CD8-positive, alpha-beta T cell (primary cell): ENCODE measurements at regions of chr4 and their contacts with region 1.

Region 1: GRCh38 chr4:10535912-10536311 is 78.7 kb upstream of the ZNF518B start:
- DNase-seq: no peak
- ATAC-seq: no peak
- H3K4me3 ChIP-seq: no peak overlapping the region
- H3K4me3 Mint-ChIP-seq: no peak overlapping the region
- H3K27ac ChIP-seq: no peak overlapping the region
- H3K27ac Mint-ChIP-seq: no peak overlapping the region
- H3K4me1 ChIP-seq: no peaks in the 10 kb centered on the region
- H3K4me1 Mint-ChIP-seq: no peaks in the 10 kb centered on the region
- H3K27me3 ChIP-seq: no peaks in the 10 kb centered on the region
- H3K27me3 Mint-ChIP-seq: peaks cover 2% of the 10 kb centered on the region
- CTCF ChIP-seq: no peak

Region 2: DNA sequence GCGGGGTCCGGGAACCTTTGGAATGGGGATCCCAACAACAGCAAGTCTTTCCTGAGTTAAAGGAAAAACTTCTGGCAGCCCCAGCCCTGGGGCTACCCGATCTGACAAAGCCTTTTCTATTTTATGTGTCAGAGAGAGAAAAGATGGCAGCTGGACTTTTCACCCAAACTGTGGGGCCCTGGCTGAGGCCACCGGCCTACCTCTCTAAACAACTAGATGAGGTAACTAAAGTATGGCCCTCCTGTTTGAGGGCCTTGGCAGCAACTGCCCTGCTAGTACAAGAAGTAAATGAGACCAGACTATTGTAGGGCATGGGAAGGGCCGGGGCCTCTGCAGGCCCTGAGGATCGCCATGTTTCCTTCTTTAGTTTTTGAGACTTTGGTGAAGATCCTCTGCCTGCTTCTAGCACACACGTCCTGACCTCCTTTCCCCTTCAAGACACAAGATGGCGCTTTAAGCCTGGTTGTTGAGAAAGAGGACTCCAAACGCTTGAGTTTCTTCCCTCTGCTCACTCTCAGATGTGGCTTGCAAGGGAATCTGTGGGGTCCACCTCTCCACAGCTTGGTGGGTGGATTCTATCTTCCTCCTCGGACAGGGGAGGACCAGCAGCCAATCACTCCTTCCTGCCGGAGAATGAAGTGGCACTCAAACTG is 773.0 kb before region 1 on chr4:
- CTCF ChIA-PET with region 1: interaction called, 5 read pairs
- POLR2A ChIA-PET with region 1: no interaction called
- intact Hi-C with region 1: loop called in 1 of 2 experiments (anchors 2 kb)
- DNase-seq: peak in 4 of 9 experiments; percentile 12 to 54 (median 32)
- ATAC-seq: no peak
- H3K4me3 ChIP-seq: no peak overlapping the region
- H3K4me3 Mint-ChIP-seq: no peak overlapping the region
- H3K27ac ChIP-seq: no peak overlapping the region
- H3K27ac Mint-ChIP-seq: no peak overlapping the region
- H3K4me1 ChIP-seq: no peaks in the 10 kb centered on the region
- H3K4me1 Mint-ChIP-seq: no peaks in the 10 kb centered on the region
- H3K27me3 ChIP-seq: no peaks in the 10 kb centered on the region
- H3K27me3 Mint-ChIP-seq: peaks cover 8% of the 10 kb centered on the region
- CTCF ChIP-seq: no peak

Region 3: GRCh38 chr4:10074767-10075105 is 461.2 kb before region 1 on chr4:
- CTCF ChIA-PET with region 1: no interaction called
- POLR2A ChIA-PET with region 1: no interaction called
- intact Hi-C with region 1: loop called in 1 of 2 experiments (anchors 5 kb)
- DNase-seq: peak in 2 of 9 experiments; percentile 19 to 47
- ATAC-seq: no peak
- H3K4me3 ChIP-seq: no peak overlapping the region
- H3K4me3 Mint-ChIP-seq: no peak overlapping the region
- H3K27ac ChIP-seq: no peak overlapping the region
- H3K27ac Mint-ChIP-seq: no peak overlapping the region
- H3K4me1 ChIP-seq: no peaks in the 10 kb centered on the region
- H3K4me1 Mint-ChIP-seq: no peaks in the 10 kb centered on the region
- H3K27me3 ChIP-seq: no peaks in the 10 kb centered on the region
- H3K27me3 Mint-ChIP-seq: no peaks in the 10 kb centered on the region
- CTCF ChIP-seq: peak; percentile 33

Region 4: DNA sequence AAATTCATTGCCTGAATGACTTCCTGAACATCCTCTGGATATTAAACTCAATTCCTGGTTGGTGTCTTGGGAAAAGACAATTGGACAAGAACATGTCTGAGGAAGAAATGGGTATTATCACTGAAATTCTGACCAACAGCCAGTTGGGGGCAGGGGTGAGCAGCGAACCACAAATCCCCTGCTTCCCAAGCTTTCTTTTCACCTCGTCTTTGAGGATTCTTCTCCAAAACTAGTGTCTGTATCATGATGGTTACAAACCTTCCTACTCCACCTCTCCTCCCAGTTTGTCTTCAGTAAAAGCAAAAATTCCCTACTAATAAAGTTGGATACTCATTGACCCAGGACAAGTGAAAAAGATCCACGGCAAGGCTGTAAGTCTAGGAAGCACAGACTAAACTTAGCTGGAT is 371.0 kb before region 1 on chr4:
- CTCF ChIA-PET with region 1: interaction called, 89 read pairs
- POLR2A ChIA-PET with region 1: no interaction called
- intact Hi-C with region 1: no loop called
- DNase-seq: peak in 2 of 9 experiments; percentile 17 to 19
- ATAC-seq: no peak
- H3K4me3 ChIP-seq: no peak overlapping the region
- H3K4me3 Mint-ChIP-seq: no peak overlapping the region
- H3K27ac ChIP-seq: no peak overlapping the region
- H3K27ac Mint-ChIP-seq: no peak overlapping the region
- H3K4me1 ChIP-seq: peaks cover 29% of the 10 kb centered on the region
- H3K4me1 Mint-ChIP-seq: peaks cover 33% of the 10 kb centered on the region
- H3K27me3 ChIP-seq: no peaks in the 10 kb centered on the region
- H3K27me3 Mint-ChIP-seq: no peaks in the 10 kb centered on the region
- CTCF ChIP-seq: peak; percentile 49